ENCODE measurements at regions of chr16 and their contacts with region 1.

Region 1: DNA sequence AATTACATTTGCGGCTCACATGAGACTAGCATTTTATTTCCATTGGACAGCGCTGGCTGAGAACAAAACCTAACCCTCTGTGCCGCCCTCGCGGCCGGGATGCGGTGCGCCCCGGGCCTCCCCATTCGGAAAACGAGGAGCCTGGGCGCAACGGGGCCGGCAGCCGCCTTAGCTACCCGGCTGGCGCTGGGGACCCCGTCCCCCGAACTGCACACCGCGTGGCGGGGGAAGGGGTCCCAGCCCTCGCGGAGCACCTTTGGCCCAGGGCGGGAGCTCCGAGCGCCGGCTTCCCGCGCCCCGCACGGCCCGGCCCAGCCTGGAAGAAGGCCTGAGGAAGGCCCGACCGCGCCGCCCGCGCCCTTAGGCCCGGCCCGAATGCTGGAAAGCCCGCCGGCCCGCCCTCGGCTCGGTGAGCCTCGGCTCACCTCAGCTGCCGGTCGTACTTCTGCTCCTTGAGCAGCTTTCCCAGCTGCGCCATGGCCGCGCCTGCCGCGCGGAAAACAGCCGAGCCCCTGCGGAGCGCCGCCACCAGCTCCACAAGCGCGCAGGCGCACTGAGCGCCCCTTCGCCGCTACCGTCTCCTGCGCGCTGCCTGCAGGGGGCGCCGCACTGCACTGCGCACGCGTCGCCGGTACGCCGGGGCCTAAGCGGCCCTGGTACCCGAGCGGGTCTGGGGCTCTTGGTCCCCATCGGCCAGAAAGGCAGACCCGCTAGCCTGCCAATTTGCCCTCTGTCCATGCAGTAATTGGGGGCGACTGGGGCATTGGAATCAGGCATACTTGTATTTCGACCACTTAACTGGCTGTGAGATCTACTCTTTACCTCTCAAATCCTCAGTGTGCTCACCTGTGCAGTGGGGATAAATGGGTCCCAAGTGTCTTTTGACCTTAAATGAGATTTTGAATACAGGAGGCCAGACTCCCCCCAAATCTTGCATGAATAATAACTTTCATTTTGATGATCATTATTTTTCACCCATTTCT is at the start of gene NAE1:
- DNase-seq: peak; percentile 57
- ATAC-seq: peak; percentile 95
- H3K4me3 ChIP-seq: peak within 1 kb of the TSS; percentile 96
- H3K27ac ChIP-seq: peak within 1 kb of the TSS; percentile 70
- H3K4me1 ChIP-seq: peaks cover 9% of the 10 kb centered on the region
- H3K27me3 ChIP-seq: no peaks in the 10 kb centered on the region
- CTCF ChIP-seq: peak; percentile 93 to 99 (median 99); a peak in 5 of 6 replicates
- EP300 ChIP-seq: no peak
- POLR2A ChIP-seq: peak; percentile 97
- RAD21 ChIP-seq: peak; percentile 52
- polyA plus RNA-seq, gene NAE1: 76.6 to 101 TPM

Region 2: DNA sequence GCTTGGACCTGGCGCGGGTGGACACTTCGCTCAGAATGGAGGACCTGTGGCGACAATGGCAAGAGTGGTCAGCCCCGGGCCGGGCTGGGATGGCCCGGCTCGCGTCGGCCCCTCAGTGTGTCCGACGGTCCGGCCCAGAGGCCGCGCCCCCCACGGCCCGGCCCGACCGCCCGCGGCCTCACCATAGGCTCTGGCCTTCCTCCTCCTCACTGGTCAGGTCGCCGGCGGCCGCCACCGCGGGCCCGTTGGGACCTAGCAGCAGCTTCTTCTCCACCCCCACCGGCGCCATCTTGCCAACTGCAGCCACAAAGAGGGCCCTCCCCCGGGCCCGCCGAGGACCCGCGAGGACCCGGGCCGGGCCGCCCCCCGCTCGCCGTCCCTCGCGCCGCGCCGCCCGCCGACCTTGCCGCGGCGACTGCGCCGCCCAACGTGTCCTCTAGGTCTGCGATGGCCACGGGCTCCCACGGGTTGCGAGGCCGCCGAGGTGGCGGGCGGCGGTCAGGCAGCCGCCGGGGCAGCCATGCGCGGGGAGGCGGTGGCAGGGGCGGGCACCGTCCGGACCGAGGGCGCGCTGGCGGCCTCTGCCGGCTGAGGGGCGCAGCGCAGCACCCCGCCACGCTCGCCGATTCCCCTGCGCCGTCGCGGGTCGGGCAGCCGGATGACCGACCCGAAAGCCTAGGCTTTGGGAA is 79.3 kb before region 1 on chr16 and contains the start of gene DYNC1LI2:
- CTCF ChIA-PET with region 1: interaction called, 22 read pairs
- POLR2A ChIA-PET with region 1: no interaction called
- RAD21 ChIA-PET with region 1: interaction called, 4 read pairs
- SMC1A ChIA-PET with region 1: interaction called, 3 read pairs
- in situ Hi-C with region 1: no loop called
- intact Hi-C with region 1: no loop called
- DNase-seq: no peak
- ATAC-seq: peak; percentile 79
- H3K4me3 ChIP-seq: peak within 1 kb of the TSS; percentile 84
- H3K27ac ChIP-seq: peak within 1 kb of the TSS; percentile 92
- H3K4me1 ChIP-seq: peaks cover 7% of the 10 kb centered on the region
- H3K27me3 ChIP-seq: peaks cover 0 to 3% of the 10 kb centered on the region in 2 experiments; a peak in 1 of 4 replicates
- CTCF ChIP-seq: peak; percentile 70 to 92 (median 72); a peak in 4 of 6 replicates
- EP300 ChIP-seq: no peak
- POLR2A ChIP-seq: peak; percentile 86
- RAD21 ChIP-seq: no peak
- polyA plus RNA-seq, gene DYNC1LI2: 6.0 to 8.3 TPM

Region 3: GRCh38 chr16:66810391-66810790 is 20.3 kb before region 1 on chr16:
- CTCF ChIA-PET with region 1: interaction called, 16 read pairs
- POLR2A ChIA-PET with region 1: no interaction called
- RAD21 ChIA-PET with region 1: no interaction called
- SMC1A ChIA-PET with region 1: interaction called, 3 read pairs
- in situ Hi-C with region 1: no loop called
- intact Hi-C with region 1: no loop called
- DNase-seq: no peak
- ATAC-seq: no peak
- H3K4me3 ChIP-seq: no peak overlapping the region
- H3K27ac ChIP-seq: no peak overlapping the region
- H3K4me1 ChIP-seq: no peaks in the 10 kb centered on the region
- H3K27me3 ChIP-seq: no peaks in the 10 kb centered on the region
- CTCF ChIP-seq: no peak
- EP300 ChIP-seq: no peak
- POLR2A ChIP-seq: no peak
- RAD21 ChIP-seq: no peak

Region 4: GRCh38 chr16:66844342-66845079 is 13.8 kb after region 1 on chr16 and contains the start of gene CA7:
- CTCF ChIA-PET with region 1: interaction called, 39 read pairs
- POLR2A ChIA-PET with region 1: no interaction called
- RAD21 ChIA-PET with region 1: interaction called, 3 read pairs
- SMC1A ChIA-PET with region 1: interaction called, 8 read pairs
- in situ Hi-C with region 1: no loop called
- intact Hi-C with region 1: no loop called
- DNase-seq: no peak
- ATAC-seq: no peak; the same call in 2 of the 3 replicates
- H3K4me3 ChIP-seq: no peak within 1 kb of the TSS
- H3K27ac ChIP-seq: no peak within 1 kb of the TSS
- H3K4me1 ChIP-seq: no peaks in the 10 kb centered on the region
- H3K27me3 ChIP-seq: peaks cover 4 to 10% of the 10 kb centered on the region in 2 experiments; a peak in 3 of 4 replicates
- CTCF ChIP-seq: no peak
- EP300 ChIP-seq: no peak
- POLR2A ChIP-seq: no peak
- RAD21 ChIP-seq: no peak
- polyA plus RNA-seq, gene CA7: 0.04 TPM in 1 of 2 experiments, not detected in the other

Region 5: GRCh38 chr16:66880288-66881013 is 49.7 kb after region 1 on chr16 and contains the start of gene PDP2:
- CTCF ChIA-PET with region 1: interaction called, 25 read pairs
- POLR2A ChIA-PET with region 1: interaction called, 5 read pairs
- RAD21 ChIA-PET with region 1: interaction called, 11 read pairs
- SMC1A ChIA-PET with region 1: interaction called, 8 read pairs
- in situ Hi-C with region 1: no loop called
- intact Hi-C with region 1: no loop called
- DNase-seq: peak; percentile 80
- ATAC-seq: peak; percentile 98
- H3K4me3 ChIP-seq: peak within 1 kb of the TSS; percentile 74
- H3K27ac ChIP-seq: peak within 1 kb of the TSS; percentile 63
- H3K4me1 ChIP-seq: peaks cover 16% of the 10 kb centered on the region
- H3K27me3 ChIP-seq: no peaks in the 10 kb centered on the region
- CTCF ChIP-seq: no peak
- EP300 ChIP-seq: 0 out of 4 replicates have a peak, but pooled peaks of 1 of the 2 experiments have one; percentile 8
- POLR2A ChIP-seq: peak; percentile 88
- RAD21 ChIP-seq: no peak
- polyA plus RNA-seq, gene PDP2: 3.0 to 4.5 TPM